A549 (cell line): ENCODE measurements at regions of chr22 and their contacts with region 1.

Region 1: GRCh38 chr22:43884600-43885325 is 7.0 kb downstream of the PNPLA5 start:
- DNase-seq: peak; percentile 48 to 57
- ATAC-seq: peak; percentile 63 to 80; a peak in 5 of 6 replicates
- H3K4me3 ChIP-seq: no peak overlapping the region
- H3K27ac ChIP-seq: no peak overlapping the region
- H3K4me1 ChIP-seq: no peaks in the 10 kb centered on the region
- CTCF ChIP-seq: peak; percentile 58
- EP300 ChIP-seq: no peak
- POLR2A ChIP-seq: no peak
- RAD21 ChIP-seq: peak; percentile 54 to 58

Region 2: DNA sequence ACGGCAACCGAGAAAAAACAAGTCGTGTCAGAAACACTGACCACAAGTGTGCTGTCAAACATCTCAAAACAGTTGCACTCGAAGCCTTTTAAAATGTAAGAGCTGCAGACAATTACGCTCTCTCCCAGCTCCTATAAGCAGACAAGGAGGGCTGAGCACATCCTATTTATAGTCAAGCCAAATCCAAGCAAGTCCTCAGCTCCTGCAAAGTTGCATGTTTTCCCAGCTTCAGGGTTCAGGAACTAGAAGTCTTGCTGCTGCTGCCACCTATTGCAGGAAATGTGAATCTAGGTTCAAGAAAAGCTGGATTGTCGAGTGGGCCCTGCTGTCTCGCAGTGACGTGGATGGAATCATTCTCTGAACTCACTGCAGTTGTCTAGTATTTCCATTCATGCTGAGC is 88.2 kb before region 1 on chr22:
- CTCF ChIA-PET with region 1: no interaction called
- POLR2A ChIA-PET with region 1: no interaction called
- DNase-seq: peak in 1 of 2 experiments; percentile 36
- ATAC-seq: peak in 1 of 2 experiments; percentile 43; a peak in 1 of 6 replicates
- H3K4me3 ChIP-seq: no peak overlapping the region
- H3K27ac ChIP-seq: no peak overlapping the region
- H3K4me1 ChIP-seq: no peaks in the 10 kb centered on the region
- CTCF ChIP-seq: peak; percentile 42
- EP300 ChIP-seq: no peak
- POLR2A ChIP-seq: no peak
- RAD21 ChIP-seq: peak; percentile 53 to 54

Region 3: GRCh38 chr22:43867839-43868652 is 16.7 kb before region 1 on chr22:
- CTCF ChIA-PET with region 1: interaction called, 21 read pairs
- POLR2A ChIA-PET with region 1: no interaction called
- DNase-seq: peak; percentile 26 to 28
- ATAC-seq: peak; percentile 70 to 90
- H3K4me3 ChIP-seq: no peak overlapping the region
- H3K27ac ChIP-seq: no peak overlapping the region
- H3K4me1 ChIP-seq: no peaks in the 10 kb centered on the region
- CTCF ChIP-seq: no peak
- EP300 ChIP-seq: no peak
- POLR2A ChIP-seq: no peak
- RAD21 ChIP-seq: no peak

Region 4: DNA sequence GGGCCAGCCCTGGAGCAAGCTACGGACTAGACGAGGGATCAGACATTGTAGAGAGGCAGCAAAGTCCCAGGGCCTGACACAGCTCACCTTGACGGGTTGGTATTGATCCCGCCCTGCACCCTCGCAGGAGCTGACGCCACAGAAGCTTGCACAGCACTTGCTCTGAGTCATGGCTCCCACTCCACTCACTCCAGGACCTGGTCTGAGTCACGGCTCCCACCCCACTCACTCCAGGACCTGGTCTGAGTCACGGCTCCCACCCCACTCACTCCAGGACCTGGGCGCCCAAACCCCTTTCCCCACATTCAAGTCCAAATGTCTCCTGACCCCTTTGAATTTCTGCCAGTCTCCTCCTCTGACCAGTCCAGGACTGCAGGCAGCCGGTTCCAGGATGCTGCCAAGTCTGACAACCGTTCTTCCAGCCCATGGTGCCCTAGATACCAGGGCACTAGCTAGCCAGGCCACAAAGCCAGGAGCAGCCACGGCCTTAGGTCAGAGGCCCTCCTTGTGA is 13.0 kb after region 1 on chr22:
- CTCF ChIA-PET with region 1: interaction called, 97 read pairs
- POLR2A ChIA-PET with region 1: no interaction called
- DNase-seq: peak in 1 of 2 experiments; percentile 29
- ATAC-seq: peak; percentile 52 to 62; a peak in 4 of 6 replicates
- H3K4me3 ChIP-seq: no peak overlapping the region
- H3K27ac ChIP-seq: peak overlapping the region in 1 of 2 experiments; percentile 76; a peak in 3 of 6 replicates
- H3K4me1 ChIP-seq: peaks cover 32% of the 10 kb centered on the region
- CTCF ChIP-seq: no peak
- EP300 ChIP-seq: no peak
- POLR2A ChIP-seq: no peak
- RAD21 ChIP-seq: no peak

Region 5: GRCh38 chr22:43945632-43946383 is 61.0 kb after region 1 on chr22:
- CTCF ChIA-PET with region 1: interaction called, 20 read pairs
- POLR2A ChIA-PET with region 1: interaction called, 3 read pairs
- DNase-seq: peak; percentile 69 to 72
- ATAC-seq: peak; percentile 99 to 100
- H3K4me3 ChIP-seq: no peak overlapping the region
- H3K27ac ChIP-seq: no peak overlapping the region
- H3K4me1 ChIP-seq: no peaks in the 10 kb centered on the region
- CTCF ChIP-seq: peak; percentile 59
- EP300 ChIP-seq: no peak
- POLR2A ChIP-seq: no peak
- RAD21 ChIP-seq: peak; percentile 34 to 38; a peak in 4 of 5 replicates

Region 6: DNA sequence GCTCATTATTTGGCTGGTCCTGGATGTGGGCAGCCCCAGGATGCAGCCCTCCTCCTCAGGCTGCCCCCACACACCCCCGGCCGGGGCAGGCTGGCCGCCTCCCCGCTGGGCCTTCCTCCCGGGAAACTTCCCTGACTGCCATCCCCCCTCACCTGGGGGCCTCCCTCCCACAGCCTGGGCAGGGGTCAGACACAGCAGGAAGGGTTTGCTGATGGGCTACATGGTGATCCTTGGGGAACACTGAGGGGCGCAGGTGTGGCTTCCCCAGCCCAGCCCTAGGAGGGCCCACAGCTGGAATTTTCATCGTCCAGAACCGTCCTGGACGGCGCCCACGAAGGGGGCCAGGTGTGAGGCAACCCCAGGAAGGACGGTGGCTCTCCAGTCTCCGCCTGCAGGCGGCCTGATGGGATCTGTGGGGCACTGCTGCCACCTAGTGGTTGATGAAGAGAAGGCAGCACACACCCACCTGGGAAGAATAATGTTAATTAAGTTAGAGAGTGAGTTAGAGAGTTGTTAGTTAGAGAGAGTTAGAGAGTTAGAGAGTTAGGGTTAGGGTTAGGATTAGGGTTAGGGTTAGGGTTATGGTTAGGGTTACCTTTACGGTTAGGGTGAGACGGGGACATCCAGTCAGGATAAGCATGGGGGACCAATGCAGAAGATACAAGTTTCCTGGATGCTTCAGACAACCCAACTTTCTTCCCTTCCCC is 741.4 kb after region 1 on chr22:
- CTCF ChIA-PET with region 1: interaction called, 16 read pairs
- POLR2A ChIA-PET with region 1: no interaction called
- DNase-seq: peak; percentile 46 to 55
- ATAC-seq: peak; percentile 65 to 77
- H3K4me3 ChIP-seq: no peak overlapping the region
- H3K27ac ChIP-seq: peak overlapping the region in 1 of 2 experiments; percentile 64; a peak in 3 of 6 replicates
- H3K4me1 ChIP-seq: peaks cover 5% of the 10 kb centered on the region; the same call in 1 of the 3 replicates
- CTCF ChIP-seq: peak; percentile 82
- EP300 ChIP-seq: no peak
- POLR2A ChIP-seq: no peak
- RAD21 ChIP-seq: peak; percentile 94 to 96